H1 (cell line): ENCODE measurements at regions of chr5 and their contacts with region 1.

Region 1: GRCh38 chr5:170434966-170435605 is 45.9 kb upstream of the KCNMB1 start:
- DNase-seq: peak; percentile 54 to 92
- H3K4me3 ChIP-seq: no peak overlapping the region
- H3K27ac ChIP-seq: no peak overlapping the region
- H3K4me1 ChIP-seq: peaks cover 0 to 17% (median 9%) of the 10 kb centered on the region in 4 experiments; a peak in 6 of 7 replicates
- H3K27me3 ChIP-seq: no peaks in the 10 kb centered on the region; a peak in 1 of 7 replicates
- CTCF ChIP-seq: peak; percentile 91 to 97 (median 97)
- EP300 ChIP-seq: no peak
- POLR2A ChIP-seq: no peak
- RAD21 ChIP-seq: peak; percentile 95 to 99

Region 2: DNA sequence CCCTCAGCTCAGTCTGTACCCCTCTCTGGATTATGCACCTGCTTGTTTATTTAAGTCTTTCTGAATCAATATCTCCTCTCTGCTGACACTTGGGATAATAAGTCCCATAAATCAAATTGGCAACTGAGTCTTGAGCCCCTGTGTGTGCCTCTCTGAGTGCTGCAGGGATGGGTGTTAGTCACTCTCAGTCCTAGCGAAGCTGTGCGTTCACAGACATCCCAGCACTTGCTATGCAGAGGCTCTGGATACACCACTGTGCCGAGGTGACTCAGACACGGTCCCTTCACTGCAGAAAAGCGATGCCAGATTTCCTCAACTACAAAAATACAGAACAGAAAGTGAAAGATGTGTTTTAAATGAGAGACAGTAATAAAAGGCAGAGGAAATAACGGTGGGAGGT is 41.9 kb before region 1 on chr5:
- CTCF ChIA-PET with region 1: no interaction called
- POLR2A ChIA-PET with region 1: no interaction called
- DNase-seq: no peak
- H3K4me3 ChIP-seq: no peak overlapping the region
- H3K27ac ChIP-seq: no peak overlapping the region
- H3K4me1 ChIP-seq: peaks cover 6 to 38% (median 19%) of the 10 kb centered on the region in 4 experiments
- H3K27me3 ChIP-seq: no peaks in the 10 kb centered on the region
- CTCF ChIP-seq: no peak
- EP300 ChIP-seq: no peak
- POLR2A ChIP-seq: no peak
- RAD21 ChIP-seq: no peak

Region 3: DNA sequence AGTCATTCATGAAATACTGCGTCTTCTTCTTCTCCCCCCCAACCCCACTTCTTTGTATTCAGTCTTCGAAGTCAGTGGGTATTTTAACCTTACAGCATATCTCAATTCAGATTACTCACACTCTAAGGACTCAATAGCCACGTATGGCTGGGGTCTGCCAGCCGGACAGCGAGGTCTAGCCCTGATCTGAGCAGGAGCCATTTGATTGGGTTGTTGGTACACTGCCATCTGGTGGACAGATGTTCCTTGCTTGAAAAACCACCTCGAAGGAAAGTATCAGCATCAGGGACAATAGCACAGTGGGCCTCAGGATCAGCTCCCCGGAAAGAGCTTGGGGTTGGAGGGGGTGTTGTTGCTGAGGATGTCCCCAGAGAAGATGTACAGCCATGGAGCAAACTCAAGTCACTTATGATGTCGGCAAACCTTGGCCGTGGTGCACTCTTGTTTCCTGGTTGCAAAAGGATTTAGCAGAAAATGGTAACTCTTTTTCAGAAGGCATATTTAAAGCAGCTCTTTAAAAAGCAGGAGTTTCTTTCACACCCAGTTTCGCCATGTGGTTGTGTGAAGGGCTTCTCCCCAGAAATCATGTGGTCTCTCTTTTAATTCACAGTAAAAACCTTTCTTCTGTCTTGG is 14.2 kb before region 1 on chr5:
- CTCF ChIA-PET with region 1: interaction called, 61 read pairs
- POLR2A ChIA-PET with region 1: no interaction called
- DNase-seq: peak in 1 of 2 experiments; percentile 72
- H3K4me3 ChIP-seq: no peak overlapping the region
- H3K27ac ChIP-seq: no peak overlapping the region
- H3K4me1 ChIP-seq: peaks cover 0 to 2% (median 0%) of the 10 kb centered on the region in 4 experiments; a peak in 2 of 7 replicates
- H3K27me3 ChIP-seq: no peaks in the 10 kb centered on the region
- CTCF ChIP-seq: peak; percentile 51 to 89 (median 87)
- EP300 ChIP-seq: no peak
- POLR2A ChIP-seq: no peak
- RAD21 ChIP-seq: peak; percentile 82 to 85

Region 4: DNA sequence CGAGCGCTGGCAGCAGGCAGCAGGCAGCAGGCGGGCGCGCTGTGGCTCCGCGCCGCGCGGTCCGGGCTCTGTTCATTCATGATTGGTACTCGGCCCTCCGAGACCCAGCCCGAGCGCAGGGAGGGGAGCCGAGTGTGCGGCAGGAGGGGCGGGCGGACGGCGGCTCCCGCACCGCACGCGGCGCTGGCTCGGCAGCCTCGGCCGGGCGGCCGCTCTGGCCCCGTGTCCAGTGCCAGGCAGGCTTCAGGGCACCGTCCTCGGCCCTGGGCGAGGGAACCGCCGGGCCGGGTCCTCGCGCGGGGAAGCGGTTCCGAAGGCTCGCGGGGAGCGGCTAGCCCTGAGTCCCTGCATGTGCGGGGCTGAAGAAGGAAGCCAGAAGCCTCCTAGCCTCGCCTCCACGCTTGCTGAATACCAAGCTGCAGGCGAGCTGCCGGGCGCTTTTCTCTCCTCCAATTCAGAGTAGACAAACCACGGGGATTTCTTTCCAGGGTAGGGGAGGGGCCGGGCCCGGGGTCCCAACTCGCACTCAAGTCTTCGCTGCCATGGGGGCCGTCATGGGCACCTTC is 69.0 kb after region 1 on chr5:
- CTCF ChIA-PET with region 1: interaction called, 10 read pairs
- POLR2A ChIA-PET with region 1: no interaction called
- DNase-seq: peak in 1 of 2 experiments; percentile 72
- H3K4me3 ChIP-seq: peak overlapping the region; percentile 24 to 63 (median 37)
- H3K27ac ChIP-seq: no peak overlapping the region
- H3K4me1 ChIP-seq: peaks cover 4 to 14% (median 8%) of the 10 kb centered on the region in 4 experiments
- H3K27me3 ChIP-seq: peaks cover 6 to 28% (median 21%) of the 10 kb centered on the region in 4 experiments
- CTCF ChIP-seq: no peak
- EP300 ChIP-seq: no peak
- POLR2A ChIP-seq: no peak
- RAD21 ChIP-seq: no peak

Region 5: DNA sequence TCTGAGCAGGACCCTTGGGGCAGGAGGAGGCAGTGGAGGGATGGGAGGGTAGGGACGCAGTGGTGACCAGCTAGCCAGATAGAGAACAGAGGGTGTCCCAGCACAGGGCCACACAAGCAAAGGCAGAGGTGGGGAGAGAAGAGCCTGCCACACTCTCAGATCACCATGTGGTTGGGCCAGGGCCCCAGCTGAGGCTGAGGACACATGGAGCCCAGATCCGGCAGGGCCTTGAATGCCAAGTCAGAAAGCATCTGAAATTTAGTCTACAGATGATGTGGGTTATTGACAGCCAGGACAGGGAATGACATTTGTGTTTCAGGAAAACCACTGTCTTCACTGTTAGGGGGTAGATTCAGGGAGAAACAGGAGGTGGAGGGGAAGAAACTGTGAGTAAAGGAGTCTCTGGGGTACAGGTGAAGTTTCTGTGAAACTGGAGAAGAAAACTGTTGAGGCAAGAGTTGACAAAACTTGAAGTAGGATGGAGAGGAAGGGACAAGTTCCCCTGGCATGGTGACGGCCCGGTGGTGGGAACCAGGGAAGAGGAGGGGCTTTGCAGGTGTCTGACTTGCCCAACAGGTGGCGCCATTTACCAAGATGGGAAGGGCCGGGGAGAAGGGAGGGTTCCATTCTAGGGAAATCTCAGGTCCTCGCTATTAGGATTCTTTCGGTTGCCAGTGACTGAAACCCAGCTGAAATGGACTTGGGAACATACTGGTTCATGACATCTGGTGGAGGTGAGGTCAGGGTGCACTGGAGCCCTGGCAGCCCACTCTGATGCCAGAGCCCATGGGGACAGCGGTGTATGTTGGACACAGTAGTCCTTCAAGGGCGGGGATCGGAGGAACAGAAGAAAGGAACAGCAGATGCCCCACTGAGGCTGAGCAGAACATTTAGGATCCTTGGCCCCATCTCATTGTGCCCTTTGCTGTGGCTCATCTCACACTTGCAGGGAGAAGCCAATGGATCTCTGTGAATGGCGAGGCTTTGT is 168.8 kb after region 1 on chr5:
- CTCF ChIA-PET with region 1: interaction called, 22 read pairs
- POLR2A ChIA-PET with region 1: no interaction called
- DNase-seq: peak; percentile 38 to 92
- H3K4me3 ChIP-seq: no peak overlapping the region
- H3K27ac ChIP-seq: no peak overlapping the region
- H3K4me1 ChIP-seq: no peaks in the 10 kb centered on the region
- H3K27me3 ChIP-seq: no peaks in the 10 kb centered on the region; a peak in 1 of 7 replicates
- CTCF ChIP-seq: peak; percentile 86 to 93 (median 91)
- EP300 ChIP-seq: no peak
- POLR2A ChIP-seq: no peak
- RAD21 ChIP-seq: peak; percentile 95

Region 6: DNA sequence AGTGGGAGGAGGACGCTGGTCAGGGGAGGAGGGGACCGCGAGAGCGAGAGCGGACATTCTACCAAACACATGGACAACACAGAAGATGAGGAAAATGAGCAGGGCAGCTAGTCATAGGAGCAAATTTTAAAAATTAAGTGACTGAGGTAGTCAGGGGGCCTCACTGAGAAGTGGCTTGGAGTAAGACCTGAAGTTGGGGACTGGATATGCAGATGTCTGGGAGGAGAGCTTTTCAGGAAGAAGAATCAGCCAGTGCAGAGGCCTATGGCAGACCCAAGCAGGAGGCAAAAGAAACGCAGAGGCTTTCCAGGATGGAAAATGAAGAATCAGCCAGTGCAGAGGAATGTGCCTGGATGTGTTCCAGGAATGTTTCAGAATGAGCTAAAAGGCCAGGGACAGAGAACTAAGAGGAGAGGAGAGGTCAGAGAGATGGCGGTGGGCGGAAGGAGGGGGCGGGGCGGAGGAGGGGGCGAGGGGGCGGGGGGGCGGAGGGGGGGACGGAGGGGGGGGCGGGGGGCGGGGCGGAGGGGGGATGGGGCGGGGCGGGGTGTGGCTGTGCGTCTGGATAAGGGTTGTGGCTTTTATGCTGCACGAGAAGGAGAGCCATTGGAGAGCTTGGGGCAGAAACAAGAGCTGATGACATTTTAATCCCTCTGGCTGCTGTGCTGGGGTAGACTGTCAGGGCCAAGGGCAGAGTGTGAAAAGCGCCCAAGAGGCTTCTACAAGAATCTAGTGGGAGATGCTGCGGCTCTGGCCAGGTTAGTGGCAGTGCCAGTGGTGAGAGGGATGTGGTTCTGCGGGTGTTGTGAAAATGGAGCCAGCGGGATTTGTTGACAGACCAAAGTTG is 198.4 kb after region 1 on chr5:
- CTCF ChIA-PET with region 1: interaction called, 160 read pairs
- POLR2A ChIA-PET with region 1: no interaction called
- DNase-seq: no peak
- H3K4me3 ChIP-seq: peak overlapping the region; percentile 51 to 71 (median 60)
- H3K27ac ChIP-seq: peak overlapping the region; percentile 45
- H3K4me1 ChIP-seq: peaks cover 10 to 21% (median 18%) of the 10 kb centered on the region in 4 experiments
- H3K27me3 ChIP-seq: no peaks in the 10 kb centered on the region
- CTCF ChIP-seq: no peak
- EP300 ChIP-seq: no peak
- POLR2A ChIP-seq: peak in 1 of 2 experiments; percentile 16; a peak in 1 of 3 replicates
- RAD21 ChIP-seq: no peak